ENCODE measurements at regions of chr1 and their contacts with region 1.

Region 1: GRCh38 chr1:113271039-113271438 is 119.3 kb upstream of the MAGI3 start:
- DNase-seq: no peak
- H3K4me3 ChIP-seq: no peak overlapping the region
- CTCF ChIP-seq: no peak

Region 2: GRCh38 chr1:113199760-113200455 is 71.1 kb before region 1 on chr1:
- in situ Hi-C with region 1: no loop called
- DNase-seq: no peak
- H3K4me3 ChIP-seq: no peak overlapping the region
- CTCF ChIP-seq: no peak

Region 3: DNA sequence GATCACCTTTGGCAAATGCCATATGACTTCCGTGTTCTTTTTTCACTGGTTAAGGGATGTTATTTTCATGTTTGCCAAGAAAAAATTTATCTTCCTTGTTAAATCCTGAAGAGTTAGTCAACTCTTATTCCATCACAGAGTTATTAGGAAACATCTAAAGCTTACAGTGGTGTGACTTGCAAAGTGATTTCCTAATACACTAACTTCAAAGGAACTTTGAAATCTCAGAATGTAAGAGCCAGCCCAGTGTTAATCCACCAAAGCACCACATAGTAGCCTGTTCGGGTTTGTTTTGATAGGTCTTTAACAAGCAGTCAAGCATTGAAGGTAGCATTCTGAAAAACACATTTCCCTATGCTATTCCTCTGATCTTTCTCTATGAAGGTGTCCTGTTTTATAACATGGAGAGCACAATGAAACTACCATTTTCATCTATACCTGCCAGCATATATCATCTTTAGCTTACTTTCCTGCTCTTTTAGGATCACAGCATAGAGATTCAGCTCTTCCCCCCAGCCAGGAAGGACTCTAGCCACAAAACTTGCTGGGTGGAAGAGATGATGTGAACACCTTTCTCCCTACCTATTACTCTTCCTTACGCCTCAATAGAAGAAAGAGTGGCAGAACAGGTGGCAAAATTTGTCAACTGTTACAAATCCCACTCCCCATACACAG is 36.9 kb after region 1 on chr1:
- in situ Hi-C with region 1: loop called (anchors 5 kb)
- DNase-seq: no peak
- H3K4me3 ChIP-seq: no peak overlapping the region
- CTCF ChIP-seq: no peak

Measured in astrocyte of the cerebellum (primary cell).